MCF 10A (cell line): ENCODE measurements at regions of chr6 and their contacts with region 1.

Region 1: DNA sequence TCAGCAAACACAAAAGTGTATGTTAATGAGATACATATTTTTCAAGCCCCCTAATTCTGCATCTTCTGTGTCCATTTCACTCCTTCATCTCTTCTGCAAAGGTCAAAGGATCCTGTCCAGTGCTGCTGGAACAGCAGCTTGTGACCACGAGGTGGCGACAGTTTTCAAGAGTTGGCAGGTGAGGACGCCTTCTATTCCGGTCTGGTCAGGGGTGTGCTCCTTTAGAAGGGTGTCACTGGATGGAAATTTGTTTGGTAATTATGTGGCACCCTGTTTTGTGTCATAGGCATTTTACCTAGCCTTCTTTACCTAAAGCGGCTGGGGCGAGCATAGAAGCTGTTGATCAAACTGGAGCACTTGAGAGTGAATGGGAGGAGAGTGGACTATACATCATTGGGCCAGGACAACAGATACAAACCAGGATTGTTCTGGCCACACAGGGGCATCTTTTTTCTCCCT is 32.9 kb upstream of the ERVFRD-1 start:
- DNase-seq: peak; percentile 81
- H3K4me3 Mint-ChIP-seq: no peak overlapping the region
- H3K27ac Mint-ChIP-seq: peak overlapping the region; percentile 87
- H3K4me1 Mint-ChIP-seq: peaks cover 36% of the 10 kb centered on the region
- H3K27me3 Mint-ChIP-seq: no peaks in the 10 kb centered on the region
- CTCF ChIP-seq: peak; percentile 91

Region 2: DNA sequence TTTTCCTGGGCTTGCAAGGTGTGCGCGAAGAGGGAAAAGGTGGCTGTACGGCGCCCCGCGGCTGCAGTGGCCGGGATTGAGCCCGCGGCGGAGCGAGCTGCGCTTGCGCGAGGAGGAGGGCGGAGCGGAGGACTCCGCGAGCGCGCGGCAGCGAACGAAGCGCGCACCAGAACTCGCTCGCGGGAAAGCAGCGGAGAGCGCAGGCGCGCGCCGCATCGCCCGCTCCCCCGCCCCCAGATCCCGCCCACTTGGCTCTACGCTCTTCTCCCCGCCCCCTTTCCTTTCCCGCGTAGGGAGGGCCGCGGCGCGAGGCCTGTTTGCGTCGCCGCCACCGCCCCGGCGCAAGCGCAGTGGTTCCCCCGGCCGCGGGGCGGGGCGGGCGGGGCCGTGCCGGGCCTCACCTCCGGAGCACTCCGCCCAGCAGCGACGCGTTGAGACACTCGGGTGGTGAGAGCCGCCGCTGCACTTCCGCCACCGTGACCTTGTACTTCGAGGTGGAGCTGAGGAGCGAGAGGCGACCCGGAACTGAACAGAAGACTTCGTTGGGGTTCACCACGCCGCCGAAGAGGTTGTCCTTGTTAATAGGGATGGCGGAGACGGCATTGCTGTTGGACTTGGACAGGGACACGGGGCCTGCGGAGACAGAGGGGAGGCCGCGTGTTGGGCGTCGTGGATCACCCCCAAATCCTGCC is 740.2 kb before region 1 on chr6:
- CTCF ChIA-PET with region 1: no interaction called
- POLR2A ChIA-PET with region 1: no interaction called
- intact Hi-C with region 1: no loop called
- DNase-seq: peak; percentile 97
- H3K4me3 Mint-ChIP-seq: peak overlapping the region; percentile 94
- H3K27ac Mint-ChIP-seq: peak overlapping the region; percentile 99
- H3K4me1 Mint-ChIP-seq: peaks cover 75% of the 10 kb centered on the region
- H3K27me3 Mint-ChIP-seq: no peaks in the 10 kb centered on the region
- CTCF ChIP-seq: peak; percentile 35

Region 3: GRCh38 chr6:10954590-10955010 is 189.8 kb before region 1 on chr6:
- CTCF ChIA-PET with region 1: interaction called, 4 read pairs
- POLR2A ChIA-PET with region 1: no interaction called
- intact Hi-C with region 1: loop called (anchors 1 kb)
- DNase-seq: peak; percentile 75
- H3K4me3 Mint-ChIP-seq: no peak overlapping the region
- H3K27ac Mint-ChIP-seq: no peak overlapping the region
- H3K4me1 Mint-ChIP-seq: peaks cover 5% of the 10 kb centered on the region
- H3K27me3 Mint-ChIP-seq: no peaks in the 10 kb centered on the region
- CTCF ChIP-seq: peak; percentile 69

Region 4: GRCh38 chr6:11093589-11094410 is 50.6 kb before region 1 on chr6 and contains the start of gene SMIM13:
- CTCF ChIA-PET with region 1: interaction called, 3 read pairs
- POLR2A ChIA-PET with region 1: interaction called, 31 read pairs
- intact Hi-C with region 1: loop called (anchors 1 kb)
- DNase-seq: peak; percentile 97
- H3K4me3 Mint-ChIP-seq: peak within 1 kb of the TSS; percentile 96
- H3K27ac Mint-ChIP-seq: peak within 1 kb of the TSS; percentile 71
- H3K4me1 Mint-ChIP-seq: peaks cover 11% of the 10 kb centered on the region
- H3K27me3 Mint-ChIP-seq: no peaks in the 10 kb centered on the region
- CTCF ChIP-seq: peak; percentile 51
- total RNA-seq, gene SMIM13: 28.1 and 29.8 TPM in 2 replicates

Region 5: DNA sequence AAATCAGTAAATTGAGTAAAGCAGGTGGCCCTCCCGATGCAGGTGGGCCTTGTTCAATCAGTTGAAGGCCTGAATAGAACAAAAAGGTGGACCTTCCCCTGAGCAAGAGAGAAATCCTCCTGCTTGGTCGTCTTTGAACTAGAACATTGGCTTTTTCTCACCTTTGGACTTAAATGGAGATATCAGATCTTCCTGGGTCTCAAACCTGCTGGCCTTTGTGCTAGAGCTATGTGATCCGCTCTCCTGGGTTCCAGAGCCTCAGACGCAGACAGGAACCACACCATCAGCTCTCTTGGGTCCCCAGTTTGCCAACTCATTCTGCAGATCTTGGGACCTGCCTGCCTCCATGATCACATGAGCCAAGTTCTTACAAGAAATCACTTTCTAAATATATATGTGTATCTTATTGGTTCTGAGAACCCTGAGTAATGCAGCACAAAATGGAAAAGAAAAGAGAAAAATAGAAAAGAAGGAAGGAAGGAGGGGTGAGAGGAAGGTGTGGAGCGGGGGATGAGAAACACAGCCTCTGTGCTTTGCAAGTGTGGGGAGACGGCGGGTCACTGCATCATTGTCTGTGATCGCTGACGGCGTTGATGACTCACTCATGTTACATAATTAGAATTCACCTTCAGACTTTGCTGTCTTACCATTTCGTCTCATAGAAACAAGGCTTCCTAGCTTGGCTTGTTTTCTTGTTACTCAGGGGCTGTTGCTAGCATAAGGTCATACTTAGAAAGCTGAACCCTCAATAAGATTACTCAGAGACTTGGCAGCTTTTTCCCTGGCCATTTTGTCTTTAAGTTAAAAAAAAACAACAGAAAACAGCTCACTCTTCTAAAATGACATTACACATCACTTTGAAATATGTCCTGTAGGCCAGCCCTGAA is 173.7 kb after region 1 on chr6:
- CTCF ChIA-PET with region 1: interaction called, 5 read pairs
- POLR2A ChIA-PET with region 1: no interaction called
- intact Hi-C with region 1: loop called (anchors 1 kb)
- DNase-seq: peak; percentile 95
- H3K4me3 Mint-ChIP-seq: no peak overlapping the region
- H3K27ac Mint-ChIP-seq: peak overlapping the region; percentile 4
- H3K4me1 Mint-ChIP-seq: peaks cover 33% of the 10 kb centered on the region
- H3K27me3 Mint-ChIP-seq: no peaks in the 10 kb centered on the region
- CTCF ChIP-seq: no peak

Region 6: DNA sequence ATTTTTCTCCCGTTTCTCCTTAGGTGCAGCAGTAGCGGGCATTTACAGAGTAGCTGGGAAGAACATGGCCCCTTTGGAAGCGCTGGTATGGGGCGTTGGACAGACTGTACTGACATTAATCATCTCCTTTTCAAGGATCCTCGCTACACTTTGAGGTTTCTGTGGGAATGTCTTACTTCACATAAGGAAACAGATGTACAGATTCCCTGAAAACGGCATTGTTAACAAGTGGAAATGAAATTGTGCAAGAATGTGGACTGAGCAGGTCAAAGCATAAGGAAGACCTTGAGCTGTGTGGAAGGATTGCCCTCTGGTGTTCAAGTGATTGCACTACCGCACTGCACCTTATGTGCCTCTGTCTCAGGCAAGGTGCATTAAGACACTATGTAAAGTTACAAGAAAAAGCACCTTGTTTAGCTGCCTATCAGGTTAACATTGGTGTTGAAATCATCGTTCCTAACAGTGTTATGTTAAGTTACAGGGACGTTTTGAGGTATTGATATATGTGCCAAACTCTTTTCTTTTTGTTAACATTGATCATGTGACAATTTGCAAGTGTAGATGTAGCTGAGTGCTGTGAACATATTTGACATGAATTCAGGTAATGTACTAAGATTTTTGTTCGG is 431.1 kb after region 1 on chr6:
- CTCF ChIA-PET with region 1: interaction called, 11 read pairs
- POLR2A ChIA-PET with region 1: interaction called, 6 read pairs
- intact Hi-C with region 1: loop called (anchors 1 kb)
- DNase-seq: peak; percentile 86
- H3K4me3 Mint-ChIP-seq: peak overlapping the region; percentile 12
- H3K27ac Mint-ChIP-seq: no peak overlapping the region
- H3K4me1 Mint-ChIP-seq: no peaks in the 10 kb centered on the region
- H3K27me3 Mint-ChIP-seq: no peaks in the 10 kb centered on the region
- CTCF ChIP-seq: peak; percentile 86